ENCODE measurements at regions of chr6 and their contacts with region 1.

Region 1: DNA sequence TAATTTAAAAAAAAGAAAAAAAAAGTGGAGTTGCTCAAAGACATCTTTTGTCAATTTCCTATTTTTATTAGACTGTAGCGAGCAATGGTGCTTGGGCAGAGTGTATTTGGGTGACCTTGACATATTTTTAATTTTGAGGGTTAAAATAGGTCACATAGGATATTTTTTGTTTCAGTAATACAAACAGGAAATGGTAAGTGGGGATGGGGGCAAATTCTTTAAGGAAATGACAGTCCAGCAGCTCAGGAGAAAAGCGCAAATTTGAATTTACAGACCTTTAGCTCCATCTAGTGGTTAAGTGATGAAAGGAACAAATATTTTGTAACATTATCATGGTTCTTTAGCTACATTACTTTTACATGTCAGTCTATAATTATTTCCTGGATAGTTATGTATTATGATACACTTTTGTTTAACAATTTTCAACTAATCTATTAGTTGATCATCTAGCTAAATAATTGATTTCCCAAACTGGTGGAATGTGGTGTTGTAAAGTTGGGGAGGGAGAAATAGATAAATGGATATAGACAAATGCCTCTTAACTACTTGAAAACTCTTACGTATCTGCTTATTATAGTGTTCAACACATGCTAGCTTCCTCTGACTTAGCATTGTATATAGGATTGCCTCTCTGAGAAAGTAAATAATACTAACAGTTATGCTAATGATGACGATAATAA is 10.0 kb downstream of the CITED2 start:
- DNase-seq: peak; percentile 48
- ATAC-seq: peak; percentile 79
- H3K4me3 ChIP-seq: no peak overlapping the region
- H3K27ac ChIP-seq: no peak overlapping the region
- H3K4me1 ChIP-seq: no peaks in the 10 kb centered on the region
- H3K27me3 ChIP-seq: no peaks in the 10 kb centered on the region
- CTCF ChIP-seq: peak; percentile 42 to 71 (median 48); a peak in 5 of 6 replicates
- EP300 ChIP-seq: no peak
- POLR2A ChIP-seq: no peak
- RAD21 ChIP-seq: peak; percentile 92

Region 2: DNA sequence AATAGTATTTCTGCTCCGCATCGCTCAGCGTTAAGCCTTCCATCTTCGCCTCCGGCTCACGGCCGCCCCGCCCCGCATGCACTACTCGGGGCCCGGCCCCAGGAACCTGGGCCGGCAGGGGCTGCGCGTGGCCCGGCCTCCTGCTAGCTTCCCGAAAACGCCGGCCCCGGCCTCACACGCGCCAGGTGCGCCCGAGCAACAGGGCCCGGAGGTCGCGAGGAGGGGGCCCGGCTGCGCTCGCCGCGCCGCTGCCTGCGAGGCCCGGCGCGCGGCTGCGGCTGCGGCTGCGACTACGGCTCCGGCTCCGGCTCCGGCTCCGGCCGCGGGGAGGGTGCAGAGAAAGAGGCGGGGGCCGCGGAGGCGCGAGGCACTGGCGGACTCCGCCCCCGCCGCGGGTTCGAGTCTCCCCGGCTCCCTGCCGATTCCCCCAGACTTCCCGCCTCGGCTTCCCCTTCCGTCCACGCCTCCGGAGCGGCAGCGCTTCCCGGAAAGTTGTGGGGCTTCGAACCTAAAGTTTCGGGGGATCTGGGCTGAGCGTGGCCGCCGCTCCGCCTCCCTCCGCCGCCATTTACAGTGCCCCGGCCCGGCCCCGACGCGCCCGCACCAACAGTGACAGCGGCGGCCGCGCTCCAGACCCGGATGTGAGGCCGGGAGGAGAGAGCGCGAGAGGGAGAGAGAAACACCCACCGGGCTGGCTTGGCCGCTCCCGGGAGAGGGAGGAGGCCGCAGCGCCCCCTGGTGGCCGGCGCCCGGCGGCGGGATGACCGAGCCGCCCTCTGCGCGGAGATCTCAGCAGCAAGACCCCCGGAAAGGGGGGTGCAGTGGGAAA is 376.6 kb before region 1 on chr6 and contains the start of gene REPS1:
- CTCF ChIA-PET with region 1: interaction called, 5 read pairs
- POLR2A ChIA-PET with region 1: no interaction called
- RAD21 ChIA-PET with region 1: interaction called, 10 read pairs
- SMC1A ChIA-PET with region 1: interaction called, 11 read pairs
- in situ Hi-C with region 1: no loop called
- intact Hi-C with region 1: loop called (anchors 1 kb)
- DNase-seq: peak; percentile 40
- ATAC-seq: peak; percentile 87
- H3K4me3 ChIP-seq: peak within 1 kb of the TSS; percentile 96
- H3K27ac ChIP-seq: peak within 1 kb of the TSS; percentile 86
- H3K4me1 ChIP-seq: no peaks in the 10 kb centered on the region
- H3K27me3 ChIP-seq: no peaks in the 10 kb centered on the region
- CTCF ChIP-seq: peak; percentile 83 to 93 (median 90)
- EP300 ChIP-seq: no peak
- POLR2A ChIP-seq: peak; percentile 96
- RAD21 ChIP-seq: peak; percentile 68
- polyA plus RNA-seq, gene REPS1: 13.7 to 21.2 TPM

Region 3: GRCh38 chr6:139124887-139125672 is 239.4 kb before region 1 on chr6:
- CTCF ChIA-PET with region 1: interaction called, 42 read pairs
- POLR2A ChIA-PET with region 1: no interaction called
- RAD21 ChIA-PET with region 1: interaction called, 17 read pairs
- SMC1A ChIA-PET with region 1: interaction called, 41 read pairs
- in situ Hi-C with region 1: loop called (anchors 5 kb)
- intact Hi-C with region 1: loop called (anchors 1 kb)
- DNase-seq: peak; percentile 54
- ATAC-seq: peak; percentile 100
- H3K4me3 ChIP-seq: no peak overlapping the region
- H3K27ac ChIP-seq: no peak overlapping the region
- H3K4me1 ChIP-seq: peaks cover 4% of the 10 kb centered on the region; the same call in 1 of the 2 replicates
- H3K27me3 ChIP-seq: no peaks in the 10 kb centered on the region
- CTCF ChIP-seq: peak; percentile 51 to 75 (median 66); a peak in 5 of 6 replicates
- EP300 ChIP-seq: 0 out of 4 replicates have a peak, but pooled peaks of 1 of the 2 experiments have one; percentile 41
- POLR2A ChIP-seq: no peak
- RAD21 ChIP-seq: peak; percentile 78

Region 4: DNA sequence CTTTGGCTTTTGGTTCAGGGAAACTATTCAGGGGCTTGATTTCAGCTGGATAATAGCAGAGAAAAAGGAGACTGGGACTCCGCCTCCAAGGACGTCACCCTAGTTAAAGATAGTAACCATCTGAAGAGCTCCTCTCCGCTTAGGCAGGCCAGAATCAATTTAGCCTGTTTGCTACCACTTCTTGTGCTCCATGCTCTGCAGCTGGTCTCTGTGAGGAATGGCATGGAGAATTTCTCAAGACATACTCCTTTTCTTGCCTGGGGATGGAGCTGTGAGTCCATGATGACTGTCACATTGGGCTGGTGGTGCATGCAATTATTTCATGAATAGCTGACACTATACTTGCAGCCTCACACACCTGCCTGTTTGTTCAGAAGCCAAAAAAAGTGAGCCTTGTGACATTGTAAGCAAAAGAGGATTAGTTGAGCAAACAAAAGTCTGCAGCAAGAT is 134.0 kb before region 1 on chr6:
- CTCF ChIA-PET with region 1: interaction called, 39 read pairs
- POLR2A ChIA-PET with region 1: no interaction called
- RAD21 ChIA-PET with region 1: interaction called, 49 read pairs
- SMC1A ChIA-PET with region 1: interaction called, 35 read pairs
- in situ Hi-C with region 1: loop called (anchors 5 kb)
- intact Hi-C with region 1: no loop called
- DNase-seq: no peak
- ATAC-seq: 0 out of 3 replicates have a peak, but pooled peaks have one; percentile 18
- H3K4me3 ChIP-seq: no peak overlapping the region
- H3K27ac ChIP-seq: no peak overlapping the region
- H3K4me1 ChIP-seq: no peaks in the 10 kb centered on the region
- H3K27me3 ChIP-seq: no peaks in the 10 kb centered on the region
- CTCF ChIP-seq: peak in 2 of 3 experiments; percentile 17 to 43; a peak in 3 of 6 replicates
- EP300 ChIP-seq: no peak
- POLR2A ChIP-seq: no peak
- RAD21 ChIP-seq: peak; percentile 63

Region 5: DNA sequence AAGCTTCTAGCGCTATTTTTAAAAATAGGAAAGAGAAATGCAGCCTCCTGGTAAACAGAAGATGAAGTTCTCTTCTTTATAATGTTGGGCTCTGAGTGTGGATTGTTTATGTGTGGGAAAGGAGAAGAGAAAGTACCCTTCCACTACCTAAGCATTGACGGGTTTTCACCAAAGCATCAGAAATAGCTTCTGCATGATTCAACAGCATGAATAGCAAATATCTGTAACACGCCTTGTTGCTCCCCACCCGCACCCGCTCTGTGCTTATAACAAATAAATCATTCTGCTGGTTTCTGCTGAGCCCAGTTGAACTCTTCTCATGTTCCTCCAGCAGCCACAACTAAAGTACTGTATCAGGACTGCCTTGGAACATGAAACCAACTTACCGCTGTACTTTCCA is 93.4 kb before region 1 on chr6:
- CTCF ChIA-PET with region 1: interaction called, 10 read pairs
- POLR2A ChIA-PET with region 1: no interaction called
- RAD21 ChIA-PET with region 1: interaction called, 11 read pairs
- SMC1A ChIA-PET with region 1: interaction called, 14 read pairs
- in situ Hi-C with region 1: no loop called
- intact Hi-C with region 1: no loop called
- DNase-seq: no peak
- ATAC-seq: peak; percentile 92
- H3K4me3 ChIP-seq: 0 out of 2 replicates have a peak overlapping the region, but pooled peaks have one; percentile 18
- H3K27ac ChIP-seq: peak overlapping the region; percentile 14; the same call in 1 of the 2 replicates
- H3K4me1 ChIP-seq: peaks cover 6% of the 10 kb centered on the region
- H3K27me3 ChIP-seq: no peaks in the 10 kb centered on the region
- CTCF ChIP-seq: no peak
- EP300 ChIP-seq: 0 out of 4 replicates have a peak, but pooled peaks of 1 of the 2 experiments have one; percentile 31
- POLR2A ChIP-seq: no peak
- RAD21 ChIP-seq: no peak

Region 6: GRCh38 chr6:139334806-139335446 is 29.5 kb before region 1 on chr6:
- CTCF ChIA-PET with region 1: interaction called, 6 read pairs
- POLR2A ChIA-PET with region 1: no interaction called
- RAD21 ChIA-PET with region 1: interaction called, 5 read pairs
- SMC1A ChIA-PET with region 1: interaction called, 12 read pairs
- in situ Hi-C with region 1: no loop called
- intact Hi-C with region 1: no loop called
- DNase-seq: no peak
- ATAC-seq: no peak
- H3K4me3 ChIP-seq: no peak overlapping the region
- H3K27ac ChIP-seq: no peak overlapping the region
- H3K4me1 ChIP-seq: peaks cover 7% of the 10 kb centered on the region; the same call in 1 of the 2 replicates
- H3K27me3 ChIP-seq: no peaks in the 10 kb centered on the region
- CTCF ChIP-seq: no peak
- EP300 ChIP-seq: no peak
- POLR2A ChIP-seq: no peak
- RAD21 ChIP-seq: no peak

Region 7: GRCh38 chr6:139496654-139497344 is 132.4 kb after region 1 on chr6:
- CTCF ChIA-PET with region 1: no interaction called
- POLR2A ChIA-PET with region 1: no interaction called
- RAD21 ChIA-PET with region 1: no interaction called
- SMC1A ChIA-PET with region 1: no interaction called
- in situ Hi-C with region 1: no loop called
- intact Hi-C with region 1: no loop called
- DNase-seq: no peak
- ATAC-seq: no peak
- H3K4me3 ChIP-seq: no peak overlapping the region
- H3K27ac ChIP-seq: no peak overlapping the region
- H3K4me1 ChIP-seq: no peaks in the 10 kb centered on the region
- H3K27me3 ChIP-seq: no peaks in the 10 kb centered on the region
- CTCF ChIP-seq: no peak
- EP300 ChIP-seq: no peak
- POLR2A ChIP-seq: no peak
- RAD21 ChIP-seq: no peak